AG04449 (cell line): ENCODE measurements at regions of chr11 and their contacts with region 1.

Region 1: DNA sequence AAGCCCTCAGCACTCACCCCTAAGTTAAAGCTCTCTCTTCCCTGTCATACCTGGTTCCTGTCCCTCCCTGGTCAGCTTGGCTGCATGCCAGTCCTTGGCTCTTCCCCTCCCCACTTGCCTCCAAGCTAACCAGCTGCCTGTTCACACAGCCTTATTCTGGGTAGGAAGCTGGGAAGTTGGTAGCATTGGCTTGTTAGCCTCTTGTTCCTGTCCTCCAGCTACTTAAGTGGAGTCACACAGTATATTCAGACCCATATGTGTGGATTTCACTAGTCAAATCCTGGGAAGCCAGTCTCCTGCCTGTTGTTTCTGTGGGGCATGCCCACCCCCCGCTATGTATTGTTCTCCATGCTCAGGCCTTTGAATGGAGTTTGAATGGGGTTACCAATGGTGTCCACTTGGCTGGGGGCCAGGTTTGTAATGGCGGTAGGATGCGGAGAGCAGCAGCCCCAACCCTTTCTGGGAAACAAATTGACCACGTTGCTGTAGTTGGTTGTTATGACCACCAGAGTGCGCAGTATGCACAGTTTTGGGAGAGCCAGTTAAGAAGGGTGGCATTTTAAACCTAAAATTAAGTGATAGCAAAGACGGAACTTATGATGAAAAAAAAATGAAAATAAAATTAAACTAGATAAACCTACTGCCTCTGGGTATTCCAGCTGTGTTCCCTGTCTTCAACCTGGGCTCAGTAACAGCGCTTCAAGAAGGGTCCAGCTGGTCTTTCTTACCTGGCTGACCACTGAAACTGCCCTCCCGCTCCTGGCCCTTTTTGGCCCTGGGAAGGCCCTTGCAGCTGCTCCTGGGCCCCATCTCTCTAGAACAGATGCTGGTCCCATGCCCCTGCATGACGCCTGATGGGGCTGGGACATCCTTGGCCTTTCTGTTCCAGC is 10.7 kb upstream of the RPS3 start:
- DNase-seq: no peak
- H3K4me3 ChIP-seq: no peak overlapping the region
- CTCF ChIP-seq: peak; percentile 71

Region 2: GRCh38 chr11:75182669-75183068 is 206.0 kb before region 1 on chr11:
- CTCF ChIA-PET with region 1: no interaction called
- POLR2A ChIA-PET with region 1: no interaction called
- DNase-seq: no peak
- H3K4me3 ChIP-seq: no peak overlapping the region
- CTCF ChIP-seq: no peak

Region 3: GRCh38 chr11:75323609-75324008 is 65.0 kb before region 1 on chr11:
- CTCF ChIA-PET with region 1: interaction called, 396 read pairs
- POLR2A ChIA-PET with region 1: interaction called, 3 read pairs
- DNase-seq: no peak
- H3K4me3 ChIP-seq: no peak overlapping the region
- CTCF ChIP-seq: no peak

Region 4: GRCh38 chr11:75365711-75366181 is 22.9 kb before region 1 on chr11:
- CTCF ChIA-PET with region 1: interaction called, 35 read pairs
- POLR2A ChIA-PET with region 1: no interaction called
- DNase-seq: no peak
- H3K4me3 ChIP-seq: no peak overlapping the region
- CTCF ChIP-seq: no peak

Region 5: DNA sequence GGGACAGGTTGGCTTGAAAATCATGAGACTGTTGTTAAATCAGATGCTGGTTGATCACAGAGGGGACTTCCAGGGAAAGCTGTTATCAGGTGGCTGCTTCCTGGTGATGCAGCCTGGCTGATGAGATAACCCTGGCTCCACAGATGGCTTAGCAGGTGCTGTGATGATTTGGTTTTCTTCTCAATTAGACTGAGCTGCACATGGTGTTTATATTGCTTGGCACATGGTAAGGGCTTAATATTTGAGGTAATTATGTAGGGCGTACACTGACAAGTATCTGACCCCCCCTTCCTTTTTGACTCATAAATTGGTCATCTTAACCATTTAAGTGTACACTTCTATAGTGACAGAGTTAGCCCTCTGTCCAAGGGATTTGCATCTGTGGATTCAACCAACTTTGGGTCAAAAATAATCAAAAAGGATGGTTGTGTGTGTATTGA is 17.7 kb after region 1 on chr11:
- CTCF ChIA-PET with region 1: interaction called, 66 read pairs
- POLR2A ChIA-PET with region 1: no interaction called
- DNase-seq: no peak
- H3K4me3 ChIP-seq: no peak overlapping the region
- CTCF ChIP-seq: no peak

Region 6: GRCh38 chr11:75445315-75445953 is 56.8 kb after region 1 on chr11:
- CTCF ChIA-PET with region 1: interaction called, 34 read pairs
- POLR2A ChIA-PET with region 1: no interaction called
- DNase-seq: no peak
- H3K4me3 ChIP-seq: no peak overlapping the region
- CTCF ChIP-seq: peak; percentile 90

Region 7: GRCh38 chr11:75468534-75469340 is 80.1 kb after region 1 on chr11:
- CTCF ChIA-PET with region 1: no interaction called
- POLR2A ChIA-PET with region 1: no interaction called
- DNase-seq: no peak
- H3K4me3 ChIP-seq: no peak overlapping the region
- CTCF ChIP-seq: no peak

Region 8: GRCh38 chr11:75532200-75533048 is 143.8 kb after region 1 on chr11:
- CTCF ChIA-PET with region 1: interaction called, 270 read pairs
- POLR2A ChIA-PET with region 1: no interaction called
- DNase-seq: no peak
- H3K4me3 ChIP-seq: no peak overlapping the region
- CTCF ChIP-seq: peak; percentile 76

Region 9: DNA sequence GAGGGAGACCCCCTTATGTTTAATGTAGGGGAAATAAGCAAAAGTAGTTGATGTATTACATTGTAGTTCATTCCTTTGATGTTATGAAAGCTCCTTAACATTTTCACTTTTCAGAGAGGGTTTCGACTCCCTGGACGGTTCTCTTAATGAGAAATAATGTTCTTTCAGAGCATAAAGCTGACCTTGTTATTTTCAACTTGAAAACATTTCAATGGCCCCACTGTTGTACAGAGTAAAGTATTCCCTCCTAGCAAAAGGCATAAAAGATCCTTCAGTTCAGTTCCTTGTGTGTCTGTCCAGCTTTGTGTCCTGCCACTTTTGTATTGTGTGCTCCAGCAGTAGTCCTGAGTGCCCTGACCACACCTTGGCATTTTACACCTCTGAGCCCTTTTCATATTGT is 490.3 kb after region 1 on chr11:
- CTCF ChIA-PET with region 1: no interaction called
- POLR2A ChIA-PET with region 1: no interaction called
- DNase-seq: no peak
- H3K4me3 ChIP-seq: no peak overlapping the region
- CTCF ChIP-seq: no peak